ENCODE measurements at regions of chr4 and their contacts with region 1.

Region 1: GRCh38 chr4:15805583-15806517 is 27.7 kb downstream of the CD38 start:
- DNase-seq: no peak
- H3K4me3 ChIP-seq: no peak overlapping the region
- H3K27ac ChIP-seq: peak overlapping the region in 1 of 4 donors; percentile 17
- H3K4me1 ChIP-seq: peaks cover 0 to 20% (median 14%) of the 10 kb centered on the region in 3 donors
- H3K27me3 ChIP-seq: peaks cover 0 to 3% (median 0%) of the 10 kb centered on the region in 4 donors
- CTCF ChIP-seq: peak; percentile 53 to 88 (median 76)
- POLR2A ChIP-seq: no peak

Region 2: DNA sequence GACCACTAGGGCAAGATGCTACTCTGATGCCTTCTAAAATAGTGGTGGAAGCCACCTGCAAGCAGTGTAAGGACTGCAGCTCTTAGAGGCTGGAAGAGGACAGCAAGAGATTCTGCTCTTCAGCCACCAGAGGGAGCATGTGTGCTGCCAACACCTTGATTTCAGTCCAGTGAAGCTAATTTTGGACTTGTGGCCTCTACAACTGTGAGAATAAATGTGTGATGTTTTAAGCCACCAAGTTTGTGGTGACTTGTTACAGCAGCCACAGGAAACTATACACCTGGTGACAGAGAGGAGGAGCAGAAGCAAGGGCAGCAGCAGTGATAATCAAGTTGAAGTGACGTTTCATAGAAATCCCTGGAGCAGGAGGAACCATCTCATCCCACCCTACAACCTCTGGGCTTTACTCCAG is 76.8 kb after region 1 on chr4:
- intact Hi-C with region 1: loop called (anchors 5 kb)
- DNase-seq: no peak
- H3K4me3 ChIP-seq: no peak overlapping the region
- H3K27ac ChIP-seq: no peak overlapping the region
- H3K4me1 ChIP-seq: peaks cover 0 to 18% (median 0%) of the 10 kb centered on the region in 3 donors
- H3K27me3 ChIP-seq: no peaks in the 10 kb centered on the region
- CTCF ChIP-seq: peak; percentile 80 to 94 (median 89)
- POLR2A ChIP-seq: no peak

Measured in esophagus squamous epithelium (tissue), 5 donors.